Activated CD4-positive, alpha-beta T cell treated with anti-CD3 and anti-CD28 coated beads for 36 hours (primary cell): ENCODE measurements at regions of chr19 and their contacts with region 1.

Region 1: GRCh38 chr19:55461259-55461973 is at the start of gene ISOC2:
- DNase-seq: peak; percentile 100
- ATAC-seq: peak; percentile 98
- H3K4me3 Mint-ChIP-seq: peak within 1 kb of the TSS; percentile 80
- H3K27ac Mint-ChIP-seq: peak within 1 kb of the TSS; percentile 82
- H3K4me1 Mint-ChIP-seq: peaks cover 14% of the 10 kb centered on the region
- H3K27me3 Mint-ChIP-seq: no peaks in the 10 kb centered on the region
- total RNA-seq, gene ISOC2: 24.3 to 28.0 TPM

Region 2: DNA sequence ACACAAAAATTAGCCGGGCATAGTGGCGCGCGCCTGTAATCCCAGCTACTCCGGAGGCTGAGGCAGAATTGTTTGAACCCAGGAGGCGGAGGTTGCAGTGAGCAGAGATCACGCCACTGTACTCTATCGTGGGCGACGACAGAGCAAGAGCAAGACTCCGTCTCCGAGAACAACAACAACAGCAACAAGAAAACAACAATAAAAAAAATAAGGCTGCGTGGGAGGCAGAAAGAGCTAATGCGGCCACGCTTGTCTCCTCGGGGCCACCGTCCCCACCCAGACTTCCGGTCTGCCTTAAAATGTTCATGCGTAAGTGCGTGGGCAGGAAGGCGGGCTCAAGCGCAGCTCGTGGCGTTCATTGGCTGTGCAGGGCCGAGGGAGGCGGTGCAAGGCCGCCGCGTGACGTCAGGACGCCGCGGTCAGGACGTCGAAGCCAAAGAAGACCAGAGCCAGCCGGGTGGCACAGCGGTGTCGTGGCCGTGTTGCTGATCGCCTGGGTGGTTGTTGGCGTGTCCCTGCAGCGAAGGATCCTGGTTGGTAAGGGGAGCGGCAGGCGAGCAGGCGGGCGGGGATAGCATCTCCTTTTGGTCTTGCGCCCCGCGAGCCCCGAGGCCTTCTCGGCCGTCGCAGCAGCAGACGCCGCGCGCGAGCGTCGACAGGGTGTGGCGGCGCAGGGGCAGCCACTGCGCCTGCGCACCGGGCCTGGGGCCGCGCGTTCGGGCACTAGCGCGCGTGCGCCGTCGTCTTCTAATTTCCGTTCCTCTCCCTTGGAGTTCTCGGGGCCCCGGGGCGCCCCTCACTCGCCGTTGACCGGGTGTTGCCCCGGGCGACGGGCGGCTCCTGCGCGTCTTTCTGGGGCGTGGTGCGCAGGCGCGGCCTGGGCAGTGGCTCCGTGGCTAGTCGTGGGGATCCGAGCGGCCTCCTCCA is 1012.4 kb before region 1 on chr19 and contains the start of gene LENG8:
- CTCF ChIA-PET with region 1: no interaction called
- POLR2A ChIA-PET with region 1: no interaction called
- intact Hi-C with region 1: loop called in 1 of 2 experiments (anchors 1 kb)
- DNase-seq: peak; percentile 98
- ATAC-seq: peak; percentile 92
- H3K4me3 Mint-ChIP-seq: peak within 1 kb of the TSS; percentile 98
- H3K27ac Mint-ChIP-seq: peak within 1 kb of the TSS; percentile 98
- H3K4me1 Mint-ChIP-seq: peaks cover 36% of the 10 kb centered on the region
- H3K27me3 Mint-ChIP-seq: no peaks in the 10 kb centered on the region
- total RNA-seq, gene LENG8: 156 to 221 TPM

Region 3: DNA sequence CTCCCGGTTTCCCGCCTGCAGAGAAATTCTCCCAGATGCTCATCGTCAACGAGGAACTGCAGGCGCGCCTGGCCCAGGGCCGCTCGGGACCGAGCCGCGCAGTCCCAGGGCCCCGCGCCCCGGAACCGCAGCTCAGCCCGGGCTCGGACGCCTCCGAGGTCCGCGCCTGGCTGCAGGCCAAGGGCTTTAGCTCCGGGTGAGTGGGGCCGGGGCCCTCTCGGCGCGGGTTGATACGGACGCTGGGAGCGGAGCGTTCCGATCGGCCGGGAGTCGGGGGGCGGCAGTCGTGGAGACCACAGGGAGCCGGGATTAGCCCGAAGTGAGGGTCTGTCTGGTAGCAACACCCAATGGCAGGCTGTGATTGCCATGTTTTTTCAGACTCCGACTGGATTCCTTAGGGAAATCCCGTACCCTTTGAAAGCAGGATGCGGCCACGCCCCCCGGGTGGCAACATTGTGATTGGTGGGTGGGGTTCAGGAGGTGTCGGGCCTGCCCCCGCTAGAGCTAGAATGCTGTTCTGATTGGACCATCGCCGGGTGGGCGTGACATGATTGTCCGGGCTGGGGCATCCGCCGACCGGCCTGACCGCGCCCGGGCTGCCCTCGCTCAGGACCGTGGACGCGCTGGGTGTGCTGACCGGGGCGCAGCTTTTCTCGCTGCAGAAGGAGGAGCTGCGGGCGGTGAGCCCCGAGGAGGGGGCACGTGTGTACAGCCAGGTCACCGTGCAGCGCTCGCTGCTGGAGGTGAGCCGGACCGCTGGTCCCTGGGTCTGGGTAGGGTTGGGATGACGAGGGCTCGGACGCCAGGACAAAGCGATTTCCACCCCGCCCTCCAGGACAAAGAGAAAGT is 374.5 kb before region 1 on chr19:
- CTCF ChIA-PET with region 1: no interaction called
- POLR2A ChIA-PET with region 1: no interaction called
- intact Hi-C with region 1: no loop called
- DNase-seq: peak; percentile 71
- ATAC-seq: peak; percentile 66
- H3K4me3 Mint-ChIP-seq: peak overlapping the region; percentile 19
- H3K27ac Mint-ChIP-seq: no peak overlapping the region
- H3K4me1 Mint-ChIP-seq: peaks cover 22% of the 10 kb centered on the region
- H3K27me3 Mint-ChIP-seq: peaks cover 44% of the 10 kb centered on the region

Region 4: DNA sequence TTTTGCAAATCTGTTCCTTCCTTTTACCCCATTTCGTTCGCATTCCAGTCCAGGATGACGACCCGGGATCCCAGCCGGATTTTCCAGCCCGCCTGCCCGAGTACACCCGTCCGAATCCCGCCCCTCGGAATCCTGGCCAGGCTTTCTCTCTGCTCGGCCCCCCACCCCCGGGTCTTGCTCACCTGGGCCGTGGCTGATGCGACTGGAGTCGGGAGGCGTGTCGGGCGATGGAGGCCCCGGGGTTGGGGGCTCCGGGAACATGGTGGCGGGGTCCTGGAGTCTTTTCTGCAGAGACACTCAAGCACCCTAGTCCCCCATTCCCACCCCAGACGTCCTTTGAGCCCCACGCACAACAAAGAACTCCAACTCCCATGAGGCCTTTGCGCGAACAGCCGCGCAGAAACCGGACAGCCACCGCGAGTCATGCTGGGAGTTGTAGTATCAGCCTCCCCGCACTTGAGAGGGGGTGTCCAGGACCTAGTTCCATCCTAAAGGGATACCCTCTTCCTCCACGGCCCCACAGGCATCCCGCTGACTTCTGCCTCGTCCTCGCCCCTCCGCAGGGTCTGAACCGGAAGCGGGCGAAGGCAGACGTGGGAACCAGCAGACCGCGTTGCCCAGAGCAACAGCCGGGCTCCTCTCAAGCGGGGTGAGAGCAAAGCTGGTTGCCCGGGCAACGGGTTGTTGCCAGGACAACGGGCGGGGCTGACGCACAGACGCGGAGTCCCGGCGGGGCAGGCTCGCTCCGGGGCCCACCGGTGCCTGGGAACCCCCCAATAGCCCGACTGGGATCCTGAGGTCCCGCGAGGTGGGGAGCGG is 282.4 kb before region 1 on chr19:
- CTCF ChIA-PET with region 1: no interaction called
- POLR2A ChIA-PET with region 1: no interaction called
- intact Hi-C with region 1: loop called in 1 of 2 experiments (anchors 1 kb)
- DNase-seq: peak; percentile 95
- ATAC-seq: peak; percentile 81
- H3K4me3 Mint-ChIP-seq: peak overlapping the region; percentile 61
- H3K27ac Mint-ChIP-seq: no peak overlapping the region
- H3K4me1 Mint-ChIP-seq: peaks cover 20% of the 10 kb centered on the region
- H3K27me3 Mint-ChIP-seq: peaks cover 49% of the 10 kb centered on the region

Region 5: GRCh38 chr19:55407800-55408532 is 53.5 kb before region 1 on chr19:
- CTCF ChIA-PET with region 1: no interaction called
- POLR2A ChIA-PET with region 1: interaction called, 3 read pairs
- intact Hi-C with region 1: loop called in 1 of 2 experiments (anchors 1 kb)
- DNase-seq: peak; percentile 98
- ATAC-seq: peak; percentile 96
- H3K4me3 Mint-ChIP-seq: peak overlapping the region; percentile 90
- H3K27ac Mint-ChIP-seq: peak overlapping the region; percentile 96
- H3K4me1 Mint-ChIP-seq: peaks cover 22% of the 10 kb centered on the region
- H3K27me3 Mint-ChIP-seq: no peaks in the 10 kb centered on the region

Region 6: GRCh38 chr19:55586976-55587668 is 125.7 kb after region 1 on chr19:
- CTCF ChIA-PET with region 1: no interaction called
- POLR2A ChIA-PET with region 1: no interaction called
- intact Hi-C with region 1: loop called in 1 of 2 experiments (anchors 1 kb)
- DNase-seq: peak; percentile 97
- ATAC-seq: peak; percentile 99
- H3K4me3 Mint-ChIP-seq: peak overlapping the region; percentile 71
- H3K27ac Mint-ChIP-seq: peak overlapping the region; percentile 37
- H3K4me1 Mint-ChIP-seq: peaks cover 20% of the 10 kb centered on the region
- H3K27me3 Mint-ChIP-seq: no peaks in the 10 kb centered on the region

Region 7: DNA sequence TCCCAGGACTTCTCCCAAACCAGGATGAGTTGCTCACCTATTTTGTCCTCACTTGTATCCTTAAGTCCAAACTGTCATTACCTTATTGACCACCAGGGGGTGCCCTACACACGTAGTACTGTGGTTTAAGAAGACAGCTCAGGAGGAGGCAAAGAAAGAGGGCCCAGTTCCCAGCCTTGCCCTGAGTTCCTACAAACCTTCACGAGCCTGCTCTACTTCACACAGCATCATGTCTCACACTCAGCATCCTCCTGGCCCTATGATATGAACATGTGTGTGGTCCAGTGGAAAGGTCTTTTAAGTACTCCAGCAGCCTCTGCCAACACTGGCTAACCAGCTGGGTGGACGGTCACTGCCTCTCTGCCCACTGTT is 171.0 kb after region 1 on chr19:
- CTCF ChIA-PET with region 1: interaction called, 10 read pairs
- POLR2A ChIA-PET with region 1: no interaction called
- intact Hi-C with region 1: loop called in 1 of 2 experiments (anchors 5 kb)
- DNase-seq: peak; percentile 93
- ATAC-seq: peak; percentile 43
- H3K4me3 Mint-ChIP-seq: peak overlapping the region; percentile 30
- H3K27ac Mint-ChIP-seq: peak overlapping the region; percentile 37
- H3K4me1 Mint-ChIP-seq: peaks cover 37% of the 10 kb centered on the region
- H3K27me3 Mint-ChIP-seq: no peaks in the 10 kb centered on the region